ENCODE measurements at regions of chr3 and their contacts with region 1.

Region 1: DNA sequence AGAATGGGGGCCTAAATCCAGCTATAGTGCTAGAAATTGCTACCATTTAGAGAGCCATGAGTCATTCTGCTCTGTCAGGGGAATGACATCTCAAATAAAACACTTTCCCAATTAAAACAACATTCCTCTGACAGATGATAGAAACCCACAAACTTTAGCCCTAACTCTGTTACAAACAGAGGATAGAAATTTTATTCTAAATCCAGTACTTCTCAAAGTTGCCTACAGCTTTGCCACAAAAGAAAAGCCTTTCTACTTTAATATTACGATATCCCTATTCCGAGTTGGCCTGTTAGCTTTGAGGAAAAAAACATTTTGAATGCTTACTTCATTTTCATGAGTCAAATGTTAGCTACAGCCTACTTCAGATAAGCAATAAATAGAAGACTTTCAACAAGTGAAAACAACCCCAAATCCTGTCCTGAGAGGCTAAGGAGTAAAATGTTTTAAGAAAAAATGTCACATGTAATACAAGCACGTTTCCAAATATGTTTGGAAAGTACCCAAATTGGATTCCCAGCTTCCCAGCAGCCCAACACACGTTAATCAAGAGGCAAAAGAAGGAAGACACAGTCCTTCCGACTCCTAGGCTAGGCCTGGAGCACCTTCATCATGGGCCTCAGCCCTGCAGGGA is 83.6 kb downstream of the ATP1B3 start:
- DNase-seq: peak; percentile 17
- ATAC-seq: peak; percentile 64
- H3K4me3 ChIP-seq: no peak overlapping the region
- H3K27ac ChIP-seq: peak overlapping the region; percentile 18; the same call in 1 of the 2 replicates
- H3K4me1 ChIP-seq: peaks cover 10% of the 10 kb centered on the region
- H3K27me3 ChIP-seq: no peaks in the 10 kb centered on the region
- CTCF ChIP-seq: no peak

Region 2: GRCh38 chr3:141905129-141905528 is 54.9 kb before region 1 on chr3:
- CTCF ChIA-PET with region 1: no interaction called
- POLR2A ChIA-PET with region 1: no interaction called
- in situ Hi-C with region 1: no loop called
- intact Hi-C with region 1: no loop called
- DNase-seq: no peak
- ATAC-seq: 0 out of 2 replicates have a peak, but pooled peaks have one; percentile 26
- H3K4me3 ChIP-seq: no peak overlapping the region
- H3K27ac ChIP-seq: no peak overlapping the region
- H3K4me1 ChIP-seq: peaks cover 2% of the 10 kb centered on the region; the same call in 1 of the 2 replicates
- H3K27me3 ChIP-seq: no peaks in the 10 kb centered on the region
- CTCF ChIP-seq: no peak

Region 3: GRCh38 chr3:141998669-141999290 is 38.7 kb after region 1 on chr3:
- CTCF ChIA-PET with region 1: no interaction called
- POLR2A ChIA-PET with region 1: no interaction called
- in situ Hi-C with region 1: no loop called
- intact Hi-C with region 1: loop called (anchors 1 kb)
- DNase-seq: no peak
- ATAC-seq: peak; percentile 72
- H3K4me3 ChIP-seq: no peak overlapping the region
- H3K27ac ChIP-seq: no peak overlapping the region
- H3K4me1 ChIP-seq: peaks cover 10% of the 10 kb centered on the region; the same call in 1 of the 2 replicates
- H3K27me3 ChIP-seq: no peaks in the 10 kb centered on the region
- CTCF ChIP-seq: peak; percentile 71

Region 4: GRCh38 chr3:142028243-142028777 is 68.3 kb after region 1 on chr3:
- CTCF ChIA-PET with region 1: no interaction called
- POLR2A ChIA-PET with region 1: no interaction called
- in situ Hi-C with region 1: no loop called
- intact Hi-C with region 1: loop called (anchors 2 kb)
- DNase-seq: peak; percentile 78
- ATAC-seq: peak; percentile 81
- H3K4me3 ChIP-seq: peak overlapping the region; percentile 54 to 59
- H3K27ac ChIP-seq: peak overlapping the region; percentile 89
- H3K4me1 ChIP-seq: peaks cover 26% of the 10 kb centered on the region
- H3K27me3 ChIP-seq: no peaks in the 10 kb centered on the region
- CTCF ChIP-seq: no peak

Region 5: GRCh38 chr3:142117056-142117851 is 157.2 kb after region 1 on chr3:
- CTCF ChIA-PET with region 1: interaction called, 4 read pairs
- POLR2A ChIA-PET with region 1: no interaction called
- in situ Hi-C with region 1: no loop called
- intact Hi-C with region 1: loop called (anchors 5 kb)
- DNase-seq: no peak
- ATAC-seq: peak; percentile 52
- H3K4me3 ChIP-seq: no peak overlapping the region
- H3K27ac ChIP-seq: no peak overlapping the region; the same call in 1 of the 2 replicates
- H3K4me1 ChIP-seq: peaks cover 18% of the 10 kb centered on the region
- H3K27me3 ChIP-seq: no peaks in the 10 kb centered on the region
- CTCF ChIP-seq: no peak